Aorta (tissue), 5 donors: ENCODE measurements at regions of chr2 and their contacts with region 1.

Region 1: GRCh38 chr2:121736462-121737341 is at the start of gene NIFK:
- DNase-seq: peak; percentile 99 to 100
- ATAC-seq: peak; percentile 99
- H3K4me3 ChIP-seq: peak within 1 kb of the TSS; percentile 32 to 73
- H3K27ac ChIP-seq: peak within 1 kb of the TSS in 1 of 2 donors; percentile 28
- H3K4me1 ChIP-seq: no peaks in the 10 kb centered on the region
- H3K27me3 ChIP-seq: no peaks in the 10 kb centered on the region
- total RNA-seq, gene NIFK: 33.8 to 35.0 TPM

Region 2: DNA sequence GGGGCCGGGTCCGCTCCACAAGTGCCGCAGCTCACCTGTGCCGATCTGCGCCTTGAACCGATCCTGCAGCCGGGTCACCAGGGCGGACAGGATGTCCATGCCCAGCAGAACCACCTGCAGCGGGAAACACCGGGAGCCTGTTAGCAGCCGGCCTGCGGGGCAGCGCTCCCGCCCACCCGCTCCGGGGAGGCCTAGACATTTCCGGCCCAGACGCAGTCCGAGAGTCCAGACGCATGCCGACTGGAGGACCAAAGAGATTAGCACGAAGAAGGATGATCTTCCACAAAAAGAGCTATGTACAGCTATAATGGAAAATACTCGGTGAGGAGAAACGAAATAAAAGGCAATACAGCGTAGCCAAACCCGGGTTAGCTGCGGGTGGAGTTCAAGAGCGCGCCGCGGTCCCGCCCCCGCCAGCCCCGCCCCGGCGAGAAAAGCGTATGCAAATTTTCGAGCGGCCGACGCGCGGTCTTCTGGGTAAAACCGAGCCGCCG is 206.4 kb before region 1 on chr2:
- intact Hi-C with region 1: loop called in 1 of 2 experiments (anchors 5 kb)
- DNase-seq: peak; percentile 88 to 94
- ATAC-seq: peak; percentile 94
- H3K4me3 ChIP-seq: peak overlapping the region; percentile 59 to 72
- H3K27ac ChIP-seq: peak overlapping the region; percentile 97 to 99
- H3K4me1 ChIP-seq: no peaks in the 10 kb centered on the region
- H3K27me3 ChIP-seq: peaks cover 0 to 2% of the 10 kb centered on the region in 2 donors

Region 3: DNA sequence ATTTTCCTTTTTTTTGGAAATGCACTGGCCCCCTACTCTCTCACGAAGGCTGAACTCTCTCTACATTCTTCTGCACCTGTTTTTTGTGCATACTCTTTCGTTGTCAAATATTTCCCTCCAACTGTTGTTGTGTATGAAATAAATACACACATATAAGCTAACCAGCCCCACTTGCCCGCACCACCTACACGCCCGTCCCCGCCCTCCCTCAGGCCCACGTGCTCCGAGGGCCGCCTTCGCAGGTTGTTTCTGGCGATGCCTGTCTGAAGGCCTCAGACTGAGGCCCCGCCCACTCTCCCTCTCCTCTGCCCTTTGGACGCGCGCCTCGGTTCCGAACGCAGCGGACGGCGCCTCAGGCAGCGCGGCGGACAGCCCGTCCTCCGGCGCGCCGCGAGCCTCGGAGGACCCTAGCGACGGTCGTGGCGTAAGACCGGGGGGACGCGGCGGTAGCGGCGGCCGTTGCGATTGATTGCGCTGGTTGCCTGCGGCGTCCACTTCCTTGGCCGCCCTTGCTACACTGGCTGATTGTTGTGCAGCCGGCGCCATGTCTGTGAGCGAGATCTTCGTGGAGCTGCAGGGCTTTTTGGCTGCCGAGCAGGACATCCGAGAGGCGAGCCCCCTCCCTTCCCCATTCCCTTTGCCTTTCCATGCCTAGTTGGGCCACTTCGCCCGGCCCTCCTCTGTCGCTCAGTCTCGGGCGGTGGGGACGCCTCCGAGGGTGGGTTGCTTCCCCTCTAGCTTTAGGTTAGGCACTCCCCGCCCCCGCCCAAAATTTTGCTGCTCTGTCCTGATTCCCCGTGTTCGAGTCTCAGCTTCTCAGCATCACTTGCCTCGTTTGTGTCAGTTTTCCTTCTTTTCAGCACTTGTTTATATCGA is 18.8 kb after region 1 on chr2 and contains the start of gene TSN:
- intact Hi-C with region 1: loop called in 1 of 2 experiments (anchors 1 kb)
- DNase-seq: peak; percentile 99
- ATAC-seq: peak; percentile 100
- H3K4me3 ChIP-seq: peak within 1 kb of the TSS; percentile 83 to 84
- H3K27ac ChIP-seq: peak within 1 kb of the TSS in 1 of 2 donors; percentile 28
- H3K4me1 ChIP-seq: no peaks in the 10 kb centered on the region
- H3K27me3 ChIP-seq: no peaks in the 10 kb centered on the region
- total RNA-seq, gene TSN: 37.5 to 37.7 TPM